A673 (cell line): ENCODE measurements at regions of chr5 and their contacts with region 1.

Region 1: GRCh38 chr5:134519989-134520388 is 5.5 kb upstream of the JADE2 start:
- DNase-seq: no peak
- H3K4me3 ChIP-seq: no peak overlapping the region
- H3K27ac ChIP-seq: no peak overlapping the region
- H3K4me1 ChIP-seq: peaks cover 5% of the 10 kb centered on the region
- H3K27me3 ChIP-seq: no peaks in the 10 kb centered on the region
- CTCF ChIP-seq: no peak

Region 2: DNA sequence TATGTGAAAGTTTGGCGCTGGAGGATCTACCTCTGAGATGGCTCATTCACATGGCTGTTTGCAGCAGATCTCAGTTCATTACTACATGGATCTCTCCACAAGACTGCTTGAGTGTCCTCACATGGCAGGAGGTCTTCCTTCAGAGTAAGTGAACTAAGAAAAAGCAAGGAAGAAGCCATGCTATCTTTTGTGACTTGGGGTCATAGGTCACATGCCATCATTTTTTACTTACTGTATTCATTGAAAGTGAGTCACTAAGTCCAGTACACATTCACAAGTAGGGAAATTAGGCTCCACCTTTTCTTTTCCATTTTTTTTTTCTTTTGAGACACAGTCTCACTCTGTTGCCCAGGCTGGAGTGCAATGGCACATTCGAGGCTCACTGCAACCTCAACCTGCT is 99.6 kb before region 1 on chr5:
- CTCF ChIA-PET with region 1: no interaction called
- POLR2A ChIA-PET with region 1: no interaction called
- intact Hi-C with region 1: no loop called
- DNase-seq: no peak
- H3K4me3 ChIP-seq: no peak overlapping the region
- H3K27ac ChIP-seq: no peak overlapping the region
- H3K4me1 ChIP-seq: no peaks in the 10 kb centered on the region
- H3K27me3 ChIP-seq: no peaks in the 10 kb centered on the region
- CTCF ChIP-seq: no peak

Region 3: DNA sequence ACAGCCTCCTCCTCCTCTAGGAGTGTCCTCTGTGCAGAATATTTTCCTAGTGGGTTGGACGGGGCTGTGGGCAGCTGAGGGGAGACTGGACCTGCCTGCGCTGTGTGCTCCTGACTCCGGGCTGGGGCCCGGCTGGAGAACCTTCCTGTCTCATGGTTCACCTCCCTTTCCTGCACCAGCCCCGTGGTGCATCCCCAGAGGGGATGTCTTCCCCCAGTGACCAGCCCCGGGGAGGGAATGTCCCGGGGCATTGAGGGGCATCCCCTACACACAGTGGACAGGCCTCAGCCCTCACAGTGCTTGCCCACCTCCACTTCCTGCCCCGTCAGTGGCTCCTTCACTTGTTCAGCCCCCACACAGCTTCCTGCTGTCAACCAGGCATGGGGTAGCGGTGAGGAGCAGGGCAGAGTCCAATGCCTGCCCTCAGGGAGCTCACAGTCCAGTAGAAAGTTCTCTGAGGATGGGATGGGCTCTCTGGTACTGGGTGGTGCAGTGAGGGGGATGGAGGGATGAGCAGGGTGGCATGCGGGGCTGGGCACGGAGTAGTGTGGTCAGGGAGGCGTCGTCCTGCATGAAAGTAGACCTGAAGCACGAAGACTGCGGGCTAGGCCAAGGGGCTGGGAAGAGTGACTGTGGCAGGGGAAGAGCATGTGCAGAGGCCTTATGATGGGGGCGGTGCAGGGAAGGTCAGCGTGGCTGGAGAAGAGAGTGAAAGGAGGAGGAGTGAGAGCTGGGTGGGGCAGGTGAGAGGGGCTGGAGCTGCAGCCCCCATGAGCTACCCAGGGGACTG is 566.1 kb after region 1 on chr5:
- CTCF ChIA-PET with region 1: interaction called, 16 read pairs
- POLR2A ChIA-PET with region 1: no interaction called
- intact Hi-C with region 1: no loop called
- DNase-seq: no peak
- H3K4me3 ChIP-seq: no peak overlapping the region
- H3K27ac ChIP-seq: no peak overlapping the region
- H3K4me1 ChIP-seq: no peaks in the 10 kb centered on the region
- H3K27me3 ChIP-seq: no peaks in the 10 kb centered on the region
- CTCF ChIP-seq: no peak